ENCODE measurements at regions of chr3 and their contacts with region 1.

Region 1: GRCh38 chr3:23999012-23999641 is 54.0 kb downstream of the NR1D2 start:
- DNase-seq: peak; percentile 21 to 64 (median 49)
- ATAC-seq: peak; percentile 43
- H3K4me3 ChIP-seq: no peak overlapping the region
- H3K4me3 Mint-ChIP-seq: no peak overlapping the region
- H3K27ac ChIP-seq: no peak overlapping the region
- H3K27ac Mint-ChIP-seq: no peak overlapping the region
- H3K4me1 ChIP-seq: no peaks in the 10 kb centered on the region
- H3K4me1 Mint-ChIP-seq: no peaks in the 10 kb centered on the region
- H3K27me3 ChIP-seq: no peaks in the 10 kb centered on the region
- H3K27me3 Mint-ChIP-seq: no peaks in the 10 kb centered on the region
- CTCF ChIP-seq: peak; percentile 85

Region 2: GRCh38 chr3:24237971-24238767 is 239.0 kb after region 1 on chr3:
- CTCF ChIA-PET with region 1: no interaction called
- POLR2A ChIA-PET with region 1: no interaction called
- intact Hi-C with region 1: loop called in 1 of 2 experiments (anchors 5 kb)
- DNase-seq: peak in 7 of 14 experiments; percentile 4 to 70 (median 17)
- ATAC-seq: peak; percentile 61
- H3K4me3 ChIP-seq: no peak overlapping the region
- H3K4me3 Mint-ChIP-seq: no peak overlapping the region
- H3K27ac ChIP-seq: no peak overlapping the region
- H3K27ac Mint-ChIP-seq: no peak overlapping the region
- H3K4me1 ChIP-seq: no peaks in the 10 kb centered on the region
- H3K4me1 Mint-ChIP-seq: no peaks in the 10 kb centered on the region
- H3K27me3 ChIP-seq: no peaks in the 10 kb centered on the region
- H3K27me3 Mint-ChIP-seq: no peaks in the 10 kb centered on the region
- CTCF ChIP-seq: peak; percentile 45

Region 3: GRCh38 chr3:24881239-24881638 is 882.1 kb after region 1 on chr3:
- CTCF ChIA-PET with region 1: no interaction called
- POLR2A ChIA-PET with region 1: no interaction called
- intact Hi-C with region 1: no loop called
- DNase-seq: no peak
- ATAC-seq: no peak
- H3K4me3 ChIP-seq: no peak overlapping the region
- H3K4me3 Mint-ChIP-seq: no peak overlapping the region
- H3K27ac ChIP-seq: no peak overlapping the region
- H3K27ac Mint-ChIP-seq: no peak overlapping the region
- H3K4me1 ChIP-seq: no peaks in the 10 kb centered on the region
- H3K4me1 Mint-ChIP-seq: no peaks in the 10 kb centered on the region
- H3K27me3 ChIP-seq: no peaks in the 10 kb centered on the region
- H3K27me3 Mint-ChIP-seq: no peaks in the 10 kb centered on the region
- CTCF ChIP-seq: no peak

Measured in CD4-positive, alpha-beta T cell (primary cell).